Right ventricle myocardium inferior (tissue), 1 donor: ENCODE measurements at regions of chr11 and their contacts with region 1.

Region 1: GRCh38 chr11:130916238-130916855 is at the start of gene SNX19:
- DNase-seq: peak; percentile 96
- ATAC-seq: peak; percentile 100
- total RNA-seq, gene SNX19: 54.9 TPM

Region 2: GRCh38 chr11:130314750-130315285 is 601.5 kb before region 1 on chr11 and contains the start of gene ZBTB44:
- intact Hi-C with region 1: loop called (anchors 10 kb)
- DNase-seq: peak; percentile 97
- ATAC-seq: peak; percentile 98
- total RNA-seq, gene ZBTB44: 41.5 TPM

Region 3: GRCh38 chr11:130653838-130654636 is 262.3 kb before region 1 on chr11:
- intact Hi-C with region 1: no loop called
- DNase-seq: peak; percentile 90
- ATAC-seq: peak; percentile 95

Region 4: DNA sequence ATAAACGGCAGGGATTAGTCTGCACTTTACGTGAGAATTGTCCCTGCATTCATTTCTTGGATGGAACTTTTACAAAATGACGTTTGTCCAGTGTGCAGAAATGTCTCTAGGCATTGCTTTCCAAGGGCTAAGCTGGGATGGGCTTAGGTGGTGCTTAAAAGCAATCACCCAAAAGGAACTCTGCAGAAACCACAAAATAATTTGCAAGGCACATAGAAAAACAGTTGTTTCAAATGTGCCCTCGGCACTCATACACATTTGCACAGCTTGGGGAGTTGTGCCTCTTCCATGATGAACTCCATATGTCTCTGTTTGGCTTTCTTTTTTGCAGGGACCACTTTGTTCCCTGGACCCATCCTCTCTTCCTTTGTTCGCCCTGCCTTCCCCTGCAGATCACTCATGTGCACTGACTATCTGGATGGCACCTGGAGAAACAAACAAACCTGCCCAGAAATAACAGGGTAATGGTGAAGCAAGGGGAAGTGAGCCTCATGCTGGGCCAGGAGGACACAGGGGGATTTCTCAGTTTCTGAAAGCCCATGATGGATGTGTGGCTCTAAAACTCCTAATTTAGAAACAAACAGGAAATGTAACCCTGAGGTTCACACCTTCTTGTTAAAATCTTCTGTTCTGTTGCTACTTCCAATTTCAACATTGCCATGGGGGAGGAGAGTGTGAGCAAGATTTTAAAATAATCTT is 150.2 kb before region 1 on chr11:
- intact Hi-C with region 1: no loop called
- DNase-seq: no peak
- ATAC-seq: no peak